ENCODE measurements at regions of chr12 and their contacts with region 1.

Region 1: DNA sequence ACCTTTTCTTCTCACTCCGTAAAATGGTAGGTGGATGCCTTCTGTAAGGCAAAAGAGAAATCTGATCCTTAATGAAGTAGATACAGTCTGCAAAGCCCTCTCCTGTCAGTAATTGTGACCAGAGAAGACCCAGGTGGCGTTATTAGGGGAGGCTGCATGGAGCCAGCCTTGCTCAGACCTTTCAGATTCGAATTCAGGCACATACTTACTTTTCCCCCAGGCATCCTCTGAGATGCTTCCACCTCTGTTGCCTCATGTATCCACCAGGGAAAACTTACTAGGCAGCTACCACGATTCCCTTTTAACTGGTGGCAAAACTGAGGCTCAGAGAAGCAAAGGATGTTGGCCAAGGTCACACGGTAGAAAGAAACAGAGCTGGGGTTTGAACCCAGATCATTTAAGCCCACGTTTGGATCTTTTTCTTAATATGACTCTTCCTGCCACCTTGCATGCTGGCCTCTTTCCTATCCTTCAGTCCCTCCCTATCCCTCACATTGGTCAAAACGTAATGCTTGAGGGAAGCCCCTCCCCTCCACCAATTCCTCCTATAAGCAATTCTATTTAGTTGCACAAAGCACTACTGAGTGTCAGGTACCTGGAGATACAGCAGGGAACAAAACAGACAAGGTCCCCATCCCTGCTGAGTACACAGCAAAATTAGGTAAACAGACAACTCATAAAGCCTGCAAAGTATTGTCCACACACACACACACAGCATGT is 179.4 kb downstream of the KSR2 start:
- DNase-seq: no peak
- H3K4me3 ChIP-seq: no peak overlapping the region
- H3K27ac ChIP-seq: no peak overlapping the region
- H3K4me1 ChIP-seq: no peaks in the 10 kb centered on the region
- H3K27me3 ChIP-seq: no peaks in the 10 kb centered on the region
- CTCF ChIP-seq: no peak
- POLR2A ChIP-seq: no peak

Region 2: DNA sequence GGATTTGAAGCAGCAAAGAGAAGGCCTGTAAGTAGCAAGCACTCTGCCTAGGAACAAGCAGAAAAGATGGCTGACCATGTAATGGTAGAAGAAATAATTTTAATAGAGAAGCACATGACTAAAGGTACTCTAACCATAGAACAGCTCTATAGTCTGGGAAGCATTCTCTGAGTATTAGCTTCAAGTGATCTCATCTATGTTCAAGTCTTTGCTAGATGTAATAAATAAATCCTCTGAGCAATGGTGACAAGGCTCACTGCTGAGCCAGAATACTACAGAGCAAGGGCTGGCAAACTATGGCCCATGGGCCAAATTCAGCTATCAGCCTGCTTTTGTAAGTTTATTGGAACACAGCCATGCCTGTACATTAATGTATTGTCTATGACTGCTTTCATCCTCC is 431.3 kb after region 1 on chr12:
- intact Hi-C with region 1: no loop called
- DNase-seq: no peak
- H3K4me3 ChIP-seq: no peak overlapping the region
- H3K27ac ChIP-seq: no peak overlapping the region
- H3K4me1 ChIP-seq: no peaks in the 10 kb centered on the region
- H3K27me3 ChIP-seq: no peaks in the 10 kb centered on the region
- CTCF ChIP-seq: no peak
- POLR2A ChIP-seq: no peak

Region 3: GRCh38 chr12:118436002-118436730 is 646.8 kb after region 1 on chr12:
- intact Hi-C with region 1: loop called (anchors 10 kb)
- DNase-seq: no peak
- H3K4me3 ChIP-seq: no peak overlapping the region
- H3K27ac ChIP-seq: no peak overlapping the region
- H3K4me1 ChIP-seq: no peaks in the 10 kb centered on the region
- H3K27me3 ChIP-seq: no peaks in the 10 kb centered on the region
- CTCF ChIP-seq: no peak
- POLR2A ChIP-seq: no peak